Dorsolateral prefrontal cortex (tissue), 120 donors: ENCODE measurements at regions of chr12 and their contacts with region 1.

Region 1: GRCh38 chr12:59149997-59150642 is 229.8 kb upstream of the LRIG3 start:
- DNase-seq: no peak
- H3K4me3 ChIP-seq: no peak overlapping the region
- H3K27ac ChIP-seq: no peak overlapping the region
- H3K27me3 ChIP-seq: no peaks in the 10 kb centered on the region
- CTCF ChIP-seq: peak; percentile 77 to 100 (median 96)

Region 2: GRCh38 chr12:58346032-58346632 is 804.0 kb before region 1 on chr12:
- intact Hi-C with region 1: loop called in 1 of 2 experiments (anchors 5 kb)
- DNase-seq: no peak
- H3K4me3 ChIP-seq: peak overlapping the region in 1 of 59 donors; percentile 9
- H3K27ac ChIP-seq: no peak overlapping the region
- H3K27me3 ChIP-seq: peaks cover 0 to 17% (median 0%) of the 10 kb centered on the region in 45 donors
- CTCF ChIP-seq: peak; percentile 78 to 97 (median 88)

Region 3: DNA sequence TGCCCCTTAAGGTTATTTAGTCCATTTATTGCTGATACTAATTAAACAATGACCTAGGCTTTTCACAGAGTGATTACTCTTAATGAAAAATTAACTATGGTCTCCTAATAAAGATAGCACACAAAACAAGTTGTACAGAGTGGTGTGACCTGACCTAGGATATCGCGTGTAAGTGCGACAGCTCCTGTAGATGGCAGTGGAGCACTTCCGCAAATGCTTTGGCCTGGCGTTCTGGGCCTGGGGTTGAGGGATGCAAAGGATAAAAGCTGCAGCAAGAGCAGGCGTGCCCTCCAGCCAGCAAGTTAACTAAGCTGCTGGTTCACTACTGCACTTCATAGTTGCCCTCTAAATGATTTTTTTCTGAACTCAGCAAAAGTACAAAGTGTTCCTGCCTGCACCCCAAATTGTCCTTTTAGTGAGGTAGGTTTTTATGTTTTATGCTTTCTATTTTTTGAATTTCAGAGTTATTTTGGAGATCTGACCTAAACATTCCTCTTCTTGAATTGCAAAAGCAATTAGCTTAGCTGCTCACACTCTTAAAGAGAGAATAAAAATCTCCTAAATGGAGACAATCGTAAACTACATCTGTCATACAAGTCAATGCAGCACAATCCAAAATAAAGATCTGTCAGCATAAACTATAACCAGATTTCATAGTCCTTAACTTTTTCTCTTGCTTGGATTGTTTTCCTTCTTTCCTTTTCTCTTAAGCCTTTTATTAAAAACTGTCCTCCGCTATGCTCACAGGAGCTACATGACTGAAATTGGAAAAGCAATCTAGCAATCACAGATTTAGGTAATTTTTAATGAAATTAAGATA is 609.4 kb before region 1 on chr12:
- intact Hi-C with region 1: loop called (anchors 5 kb)
- DNase-seq: peak; percentile 6 to 81 (median 66)
- H3K4me3 ChIP-seq: no peak overlapping the region
- H3K27ac ChIP-seq: no peak overlapping the region
- H3K27me3 ChIP-seq: no peaks in the 10 kb centered on the region
- CTCF ChIP-seq: peak; percentile 36 to 87 (median 72)

Region 4: GRCh38 chr12:58833853-58834252 is 316.3 kb before region 1 on chr12:
- intact Hi-C with region 1: loop called in 1 of 2 experiments (anchors 10 kb)
- DNase-seq: no peak
- H3K4me3 ChIP-seq: no peak overlapping the region
- H3K27ac ChIP-seq: no peak overlapping the region
- H3K27me3 ChIP-seq: no peaks in the 10 kb centered on the region
- CTCF ChIP-seq: peak in 51 of 56 donors; percentile 7 to 76 (median 46)

Region 5: DNA sequence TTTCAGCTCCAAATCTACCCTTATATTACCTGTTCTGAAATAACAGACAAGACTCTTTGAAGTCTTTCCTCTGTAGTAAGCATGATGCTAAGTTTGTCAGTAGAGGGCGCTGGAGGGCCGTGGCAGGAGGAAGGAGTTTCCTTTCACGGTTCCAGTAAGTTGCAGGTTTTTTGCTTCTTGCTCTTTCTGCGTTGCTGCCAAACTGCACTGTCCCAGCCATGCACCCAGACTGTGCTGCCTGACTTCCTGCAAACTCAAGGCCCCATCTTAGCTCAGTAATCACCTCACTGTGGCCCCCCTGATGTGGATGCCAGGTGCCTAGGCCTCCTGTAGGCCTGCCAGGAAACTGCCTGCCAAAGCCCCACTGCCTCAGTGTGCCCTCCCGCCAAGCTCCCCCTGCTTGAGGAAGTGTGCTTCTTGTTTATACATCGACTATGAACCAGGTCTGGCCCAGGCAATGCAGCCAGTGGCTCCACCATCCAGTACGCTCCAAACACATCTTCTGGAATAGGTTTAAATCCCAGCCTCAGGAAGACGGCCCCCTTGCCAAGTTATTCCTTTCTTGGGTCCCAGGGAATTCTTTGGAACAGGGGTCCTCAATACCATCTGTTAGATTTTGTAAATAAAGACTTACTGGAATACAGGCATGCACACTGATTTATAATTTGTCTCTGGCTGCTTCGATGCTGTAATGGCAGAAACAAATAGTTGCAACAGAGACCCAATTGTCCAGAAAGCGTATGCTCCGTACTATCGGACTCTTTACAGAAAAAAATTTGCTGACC is 36.1 kb before region 1 on chr12:
- intact Hi-C with region 1: loop called (anchors 2 to 5 kb)
- DNase-seq: peak; percentile 28 to 82 (median 76)
- H3K4me3 ChIP-seq: peak overlapping the region in 17 of 59 donors; percentile 11 to 48 (median 23)
- H3K27ac ChIP-seq: peak overlapping the region in 2 of 59 donors; percentile 30 to 35
- H3K27me3 ChIP-seq: no peaks in the 10 kb centered on the region
- CTCF ChIP-seq: peak; percentile 66 to 96 (median 90)